Pancreas (tissue), 10 donors: ENCODE measurements at regions of chr14 and their contacts with region 1.

Region 1: DNA sequence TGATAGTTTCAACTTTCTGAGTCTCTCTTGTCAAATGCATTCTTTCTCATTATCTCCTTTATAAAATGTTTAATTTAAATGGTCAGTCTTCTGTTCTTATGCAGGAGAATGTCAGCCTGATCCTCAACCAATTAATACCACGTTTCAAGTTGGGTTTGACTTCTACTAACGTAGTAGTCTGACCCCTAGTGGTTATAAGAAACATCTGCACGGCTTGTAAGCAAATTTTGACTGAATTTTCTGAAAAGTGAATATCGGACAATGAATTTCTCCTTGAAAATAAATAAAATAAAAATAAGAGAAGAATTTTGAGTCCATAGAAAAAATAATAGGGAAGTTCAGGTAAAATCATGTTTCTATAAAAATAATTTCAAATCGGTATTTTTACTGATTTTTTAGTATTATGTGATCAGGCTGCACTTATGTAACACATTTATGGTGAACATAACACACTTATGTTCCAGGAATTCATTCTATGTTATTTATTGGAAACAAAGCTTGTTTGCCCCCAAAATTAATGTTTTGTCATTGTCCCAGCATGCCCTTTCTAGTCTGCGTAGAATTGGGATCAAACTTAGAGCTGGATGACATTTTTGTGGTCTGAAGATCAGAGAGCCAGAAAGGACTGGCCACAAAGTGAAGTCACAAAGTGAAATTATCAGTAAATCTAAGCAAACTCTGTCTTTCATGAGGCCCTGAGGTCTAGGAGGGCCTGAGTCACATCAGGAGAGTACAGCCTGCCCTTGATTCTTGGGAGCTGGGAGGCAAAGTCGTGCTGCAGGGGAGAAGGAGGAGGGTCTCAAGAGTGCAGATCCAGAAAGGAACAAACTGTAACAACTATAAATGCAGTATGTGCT is 101.2 kb upstream of the STXBP6 start:
- DNase-seq: no peak
- ATAC-seq: peak; percentile 60 to 83 (median 82)
- H3K4me3 ChIP-seq: no peak overlapping the region
- H3K27ac ChIP-seq: no peak overlapping the region
- H3K4me1 ChIP-seq: no peaks in the 10 kb centered on the region
- H3K27me3 ChIP-seq: no peaks in the 10 kb centered on the region
- CTCF ChIP-seq: peak; percentile 57 to 84 (median 70)

Region 2: DNA sequence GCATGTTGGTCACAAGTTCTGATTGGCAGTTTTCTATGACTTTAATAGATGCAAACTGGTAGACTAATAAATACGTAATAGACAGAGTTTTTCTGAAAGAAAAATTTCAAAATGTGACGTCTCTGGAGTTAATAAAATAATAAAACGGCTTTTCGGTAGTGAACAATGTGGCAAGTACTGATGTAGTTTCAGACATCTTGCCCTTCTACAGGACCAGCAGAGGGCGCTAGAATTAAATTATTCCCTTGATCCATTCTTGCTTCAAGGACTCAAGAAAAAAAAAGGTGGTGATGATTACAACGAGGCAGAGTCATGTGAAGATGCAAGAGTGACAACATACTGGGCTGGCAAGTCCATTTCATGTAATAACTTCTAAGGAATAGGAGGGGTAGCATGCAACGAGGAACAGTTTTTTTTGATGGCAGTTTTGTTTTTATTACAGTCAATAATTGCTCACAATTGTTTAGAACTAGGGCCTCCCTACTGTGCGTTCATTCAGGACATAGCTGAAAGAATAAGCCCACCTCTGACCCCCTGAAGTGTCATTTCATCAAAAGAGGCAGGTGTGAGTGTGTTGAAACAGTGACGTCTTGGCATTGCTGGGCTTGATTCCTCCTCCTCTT is 416.2 kb before region 1 on chr14:
- intact Hi-C with region 1: loop called in 2 of 3 experiments (anchors 5 to 10 kb)
- DNase-seq: peak in 3 of 6 donors; percentile 13 to 45 (median 28)
- ATAC-seq: peak in 3 of 4 donors; percentile 81 to 85 (median 84)
- H3K4me3 ChIP-seq: no peak overlapping the region
- H3K27ac ChIP-seq: no peak overlapping the region
- H3K4me1 ChIP-seq: no peaks in the 10 kb centered on the region
- H3K27me3 ChIP-seq: no peaks in the 10 kb centered on the region
- CTCF ChIP-seq: peak; percentile 26 to 71 (median 62)

Region 3: DNA sequence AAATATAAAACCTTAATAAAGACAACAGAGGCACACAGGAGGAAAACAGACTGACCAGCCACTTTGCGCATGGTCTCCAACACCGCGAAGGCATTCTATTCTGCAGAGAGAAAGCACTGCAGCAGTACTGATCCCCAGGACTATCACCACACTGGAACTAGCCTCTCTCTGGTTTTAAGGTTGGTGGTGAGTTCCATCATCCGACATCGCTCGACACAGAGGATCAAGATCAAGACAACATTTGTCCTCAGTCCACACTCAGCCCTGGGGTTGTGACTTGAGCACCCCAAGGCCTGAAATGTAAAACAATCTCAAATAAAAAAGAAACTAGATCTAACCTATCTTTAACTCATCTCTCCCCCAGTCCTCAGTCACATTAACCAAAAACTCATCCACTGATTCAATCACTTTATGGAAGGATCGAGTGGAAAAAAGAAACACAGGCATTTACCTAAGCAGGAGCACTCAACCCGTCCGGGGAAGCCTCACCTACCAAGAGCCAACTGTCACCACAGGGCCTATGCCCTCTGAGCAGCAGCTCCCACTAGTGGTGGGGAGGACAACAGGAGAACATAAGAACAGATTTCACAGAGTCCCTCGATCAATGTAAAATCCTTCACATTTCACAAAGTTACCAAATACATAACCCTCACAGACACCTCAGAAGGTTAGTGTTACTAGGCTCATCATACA is 118.9 kb before region 1 on chr14:
- intact Hi-C with region 1: no loop called
- DNase-seq: no peak
- ATAC-seq: no peak
- H3K4me3 ChIP-seq: no peak overlapping the region
- H3K27ac ChIP-seq: no peak overlapping the region
- H3K4me1 ChIP-seq: no peaks in the 10 kb centered on the region
- H3K27me3 ChIP-seq: no peaks in the 10 kb centered on the region
- CTCF ChIP-seq: no peak

Region 4: DNA sequence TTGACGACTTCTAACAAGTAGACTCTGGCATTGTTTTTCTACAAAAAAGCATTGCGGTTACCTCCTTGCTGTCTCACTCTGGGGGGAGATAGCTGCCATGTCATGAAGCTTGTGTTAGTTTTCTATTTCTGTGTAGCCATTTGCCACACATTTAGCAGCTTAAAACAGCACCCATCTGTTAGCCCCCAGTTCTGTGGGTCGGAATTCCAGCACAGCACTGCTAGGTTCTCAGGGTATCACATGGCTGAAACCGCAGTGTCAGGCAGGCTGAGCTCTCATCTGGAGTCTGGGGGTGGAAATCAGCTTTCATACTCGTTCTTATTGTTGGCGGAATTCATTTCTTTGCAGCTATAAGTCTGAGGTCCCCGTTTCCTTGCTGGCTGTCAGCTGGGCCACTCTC is 81.3 kb before region 1 on chr14:
- intact Hi-C with region 1: no loop called
- DNase-seq: no peak
- ATAC-seq: no peak
- H3K4me3 ChIP-seq: no peak overlapping the region
- H3K27ac ChIP-seq: no peak overlapping the region
- H3K4me1 ChIP-seq: no peaks in the 10 kb centered on the region
- H3K27me3 ChIP-seq: no peaks in the 10 kb centered on the region
- CTCF ChIP-seq: no peak